ENCODE measurements at regions of chr3 and their contacts with region 1.

Region 1: DNA sequence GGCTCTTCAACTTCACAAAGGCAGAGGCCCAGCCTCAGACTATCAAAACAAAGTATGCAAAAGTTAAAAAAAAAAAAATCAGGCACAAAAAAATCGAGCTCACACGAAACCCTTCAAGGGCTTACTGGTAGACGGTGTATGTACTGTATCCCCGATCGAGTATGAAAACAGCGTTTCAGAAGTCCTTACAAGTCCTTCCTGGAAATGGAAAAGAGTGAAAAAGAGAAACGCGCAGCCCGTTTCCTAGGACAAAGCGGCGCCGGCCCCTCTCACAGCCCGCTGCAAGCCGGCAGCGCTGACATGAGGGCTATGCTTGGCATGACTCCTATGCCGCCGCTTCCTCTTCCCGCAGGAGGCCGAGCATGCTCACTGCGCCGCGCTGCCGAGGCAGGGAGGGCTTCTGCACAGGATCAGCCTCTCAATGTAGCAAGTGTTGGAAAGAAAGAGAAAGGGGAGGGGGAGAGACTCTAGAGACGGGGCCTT is at the start of gene VGLL4:
- DNase-seq: peak; percentile 94
- ATAC-seq: peak; percentile 90 to 94
- total RNA-seq, gene VGLL4: 28.6 to 36.1 TPM

Region 2: DNA sequence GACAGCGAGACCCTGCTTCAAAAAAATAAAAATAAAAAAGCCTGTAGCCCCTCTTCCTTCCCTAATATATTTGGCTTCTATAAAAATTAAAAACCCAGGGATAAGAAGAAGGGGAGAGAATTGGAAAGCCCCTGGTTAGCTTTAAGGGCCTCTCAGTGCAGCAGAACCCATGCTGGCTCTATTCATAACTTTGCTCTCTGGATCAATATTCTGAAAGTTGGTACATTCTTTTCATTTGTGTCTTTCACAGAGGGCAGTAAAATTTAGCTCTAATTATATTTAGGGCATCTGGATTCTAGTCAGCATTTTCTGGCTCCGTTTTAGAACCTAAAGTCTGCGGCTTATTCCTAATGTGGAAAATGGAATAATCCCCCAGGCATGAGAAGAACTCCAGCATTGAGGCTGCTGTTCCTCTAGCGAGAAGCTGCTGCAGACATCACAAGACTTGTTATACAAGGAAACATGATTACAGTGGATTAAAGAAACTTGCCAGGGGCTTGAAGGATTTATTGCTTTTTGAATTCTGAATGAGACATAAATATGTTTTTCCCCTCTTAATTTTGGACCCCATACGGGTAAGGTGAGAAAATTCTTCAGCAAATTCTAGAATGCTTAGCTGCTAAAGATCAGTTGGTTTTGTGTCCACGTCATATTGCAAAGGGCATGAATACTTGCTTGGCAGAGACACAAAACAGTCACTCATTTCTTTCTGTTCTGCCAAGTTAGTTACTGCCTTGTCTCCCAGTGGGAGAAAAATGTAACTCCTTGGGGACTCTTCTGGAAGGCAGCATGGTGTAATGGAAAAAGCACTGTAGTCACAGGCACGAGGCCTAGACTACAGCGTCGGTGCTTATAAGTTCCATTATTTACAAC is 177.7 kb before region 1 on chr3:
- intact Hi-C with region 1: loop called in 1 of 2 experiments (anchors 10 kb)
- DNase-seq: no peak
- ATAC-seq: peak; percentile 84 to 91

Region 3: GRCh38 chr3:11509173-11510000 is 134.3 kb before region 1 on chr3:
- intact Hi-C with region 1: loop called in 1 of 2 experiments (anchors 5 kb)
- DNase-seq: peak; percentile 83
- ATAC-seq: peak; percentile 89 to 94

Region 4: GRCh38 chr3:11568503-11569155 is 75.0 kb before region 1 on chr3:
- intact Hi-C with region 1: loop called in 1 of 2 experiments (anchors 10 kb)
- DNase-seq: peak; percentile 86
- ATAC-seq: peak; percentile 50 to 74

Region 5: GRCh38 chr3:11601446-11602238 is 42.0 kb before region 1 on chr3:
- intact Hi-C with region 1: loop called in 1 of 2 experiments (anchors 5 kb)
- DNase-seq: peak; percentile 72
- ATAC-seq: peak; percentile 9 to 64

Region 6: DNA sequence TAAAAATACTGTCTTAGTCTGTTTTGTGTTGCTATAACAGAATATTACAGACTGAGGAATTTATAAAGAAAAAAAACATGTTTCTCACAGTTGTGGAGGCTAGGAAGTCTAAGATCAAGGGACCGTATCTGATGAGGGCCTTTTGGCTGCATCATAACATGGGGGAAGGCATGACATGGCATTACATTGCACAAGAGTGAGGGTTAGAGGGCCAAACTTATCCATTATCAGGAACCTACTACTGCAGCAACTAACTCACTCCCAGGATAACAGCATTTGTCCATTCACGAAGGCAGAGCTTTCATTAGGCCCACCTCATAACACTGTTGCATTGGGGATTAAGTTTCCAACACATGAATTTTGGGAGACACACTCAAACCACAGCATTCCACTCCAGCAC is 390.8 kb after region 1 on chr3:
- intact Hi-C with region 1: no loop called
- DNase-seq: no peak
- ATAC-seq: no peak